H1 (cell line): ENCODE measurements at regions of chr19 and their contacts with region 1.

Region 1: GRCh38 chr19:7943444-7944176 is at the start of gene TIMM44:
- DNase-seq: peak; percentile 98
- H3K4me3 ChIP-seq: peak within 1 kb of the TSS; percentile 90 to 99 (median 97)
- H3K27ac ChIP-seq: peak within 1 kb of the TSS; percentile 94
- H3K4me1 ChIP-seq: peaks cover 0 to 3% (median 0%) of the 10 kb centered on the region in 4 experiments; a peak in 1 of 7 replicates
- H3K27me3 ChIP-seq: no peaks in the 10 kb centered on the region
- CTCF ChIP-seq: no peak
- EP300 ChIP-seq: no peak
- POLR2A ChIP-seq: peak; percentile 97 to 99
- RAD21 ChIP-seq: no peak
- total RNA-seq, gene TIMM44: 123 and 131 TPM in 2 replicates

Region 2: DNA sequence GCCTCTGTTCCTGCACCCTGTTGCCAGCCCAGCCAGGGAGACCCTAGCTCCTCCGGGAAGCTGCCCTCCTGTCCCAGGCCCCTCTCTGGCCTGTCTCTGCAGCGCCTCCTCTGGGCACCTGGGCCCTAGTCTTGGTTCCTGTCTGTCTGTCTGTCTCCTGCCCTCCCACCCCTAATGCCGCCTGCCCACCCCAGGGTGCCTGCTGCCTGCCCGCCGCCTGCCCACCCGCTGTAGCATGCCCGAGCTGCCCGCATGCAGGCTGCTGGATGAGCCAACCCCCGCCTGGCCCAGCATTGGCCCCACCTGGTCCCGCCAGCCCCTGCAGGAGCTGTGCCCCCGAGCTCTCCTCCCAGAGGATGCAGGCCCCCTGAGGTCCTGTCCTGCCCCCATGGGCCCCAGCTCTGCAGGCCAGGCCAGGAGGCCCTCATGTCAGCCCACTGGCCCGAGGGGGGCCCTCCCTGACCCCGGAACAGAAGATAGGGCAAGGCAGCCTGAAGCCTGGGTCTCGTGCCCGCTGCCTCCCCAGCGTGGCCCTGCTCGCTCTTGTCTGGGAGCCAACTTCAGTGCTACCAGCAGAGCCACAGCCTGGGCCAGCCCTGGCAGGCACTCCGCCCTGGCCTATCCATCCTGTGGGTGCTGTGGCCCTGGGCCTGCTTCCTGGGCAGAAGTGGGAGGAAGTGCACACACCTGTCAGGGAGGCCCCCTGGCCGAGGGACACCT is 34.7 kb before region 1 on chr19:
- CTCF ChIA-PET with region 1: interaction called, 4 read pairs
- POLR2A ChIA-PET with region 1: interaction called, 12 read pairs
- DNase-seq: no peak
- H3K4me3 ChIP-seq: no peak overlapping the region
- H3K27ac ChIP-seq: no peak overlapping the region
- H3K4me1 ChIP-seq: peaks cover 0 to 5% (median 4%) of the 10 kb centered on the region in 4 experiments; a peak in 5 of 7 replicates
- H3K27me3 ChIP-seq: peaks cover 0 to 1% (median 0%) of the 10 kb centered on the region in 4 experiments; a peak in 1 of 7 replicates
- CTCF ChIP-seq: peak; percentile 30 to 44 (median 32)
- EP300 ChIP-seq: no peak
- POLR2A ChIP-seq: no peak
- RAD21 ChIP-seq: 0 out of 4 replicates have a peak, but pooled peaks of 1 of the 2 experiments have one; percentile 12

Region 3: DNA sequence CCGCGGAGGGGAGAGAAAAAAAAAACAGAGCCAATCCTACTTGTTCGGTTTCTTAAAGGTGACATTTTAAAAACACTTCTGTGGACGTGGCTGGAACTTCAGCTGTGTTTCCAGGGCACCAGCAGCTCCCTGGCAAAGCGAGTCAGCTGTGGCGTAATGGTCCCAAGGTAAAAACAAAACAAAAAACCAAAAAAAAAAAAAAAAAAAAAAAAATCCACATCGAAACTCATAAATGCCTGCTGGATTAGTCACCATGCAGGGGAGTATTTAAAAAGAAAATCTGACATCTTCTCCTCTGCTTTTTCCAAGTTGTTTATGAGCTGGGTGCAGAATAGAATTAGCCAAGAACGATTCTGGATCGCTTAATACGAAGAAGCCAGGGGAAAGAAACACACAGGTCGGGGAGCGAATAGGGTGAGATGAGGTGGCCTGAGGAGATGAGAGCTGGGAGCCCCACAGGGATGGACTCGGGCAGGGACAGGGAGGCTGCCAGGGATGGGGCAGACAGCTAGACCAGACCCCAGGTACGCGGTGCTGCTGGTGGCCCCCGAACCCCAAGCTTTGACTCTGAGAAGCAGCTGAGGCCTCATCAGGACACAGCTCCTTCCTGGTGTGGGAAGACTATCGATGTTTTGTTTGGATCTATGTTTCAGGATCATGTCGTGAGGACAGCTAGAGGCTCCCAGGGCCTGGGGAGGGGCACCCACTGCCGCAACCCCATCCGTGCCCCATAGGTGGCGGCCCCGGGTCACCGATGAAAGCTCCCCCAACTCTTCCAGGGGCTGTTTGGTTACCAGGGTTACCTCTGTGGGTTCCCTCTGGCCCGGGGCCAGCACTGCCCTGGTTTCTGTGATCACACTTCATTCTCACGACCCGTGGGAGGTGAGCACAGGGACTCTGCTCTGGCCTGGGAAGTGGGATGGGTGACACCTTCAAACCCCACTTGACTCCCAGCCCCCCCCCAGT is 14.6 kb before region 1 on chr19:
- CTCF ChIA-PET with region 1: interaction called, 28 read pairs
- POLR2A ChIA-PET with region 1: interaction called, 205 read pairs
- DNase-seq: peak in 1 of 2 experiments; percentile 90
- H3K4me3 ChIP-seq: no peak overlapping the region
- H3K27ac ChIP-seq: no peak overlapping the region
- H3K4me1 ChIP-seq: peaks cover 0 to 8% (median 2%) of the 10 kb centered on the region in 4 experiments; a peak in 5 of 7 replicates
- H3K27me3 ChIP-seq: no peaks in the 10 kb centered on the region
- CTCF ChIP-seq: peak; percentile 49 to 71 (median 69); a peak in 3 of 4 replicates
- EP300 ChIP-seq: no peak
- POLR2A ChIP-seq: peak in 1 of 2 experiments; percentile 38; a peak in 1 of 3 replicates
- RAD21 ChIP-seq: peak; percentile 50 to 65

Region 4: DNA sequence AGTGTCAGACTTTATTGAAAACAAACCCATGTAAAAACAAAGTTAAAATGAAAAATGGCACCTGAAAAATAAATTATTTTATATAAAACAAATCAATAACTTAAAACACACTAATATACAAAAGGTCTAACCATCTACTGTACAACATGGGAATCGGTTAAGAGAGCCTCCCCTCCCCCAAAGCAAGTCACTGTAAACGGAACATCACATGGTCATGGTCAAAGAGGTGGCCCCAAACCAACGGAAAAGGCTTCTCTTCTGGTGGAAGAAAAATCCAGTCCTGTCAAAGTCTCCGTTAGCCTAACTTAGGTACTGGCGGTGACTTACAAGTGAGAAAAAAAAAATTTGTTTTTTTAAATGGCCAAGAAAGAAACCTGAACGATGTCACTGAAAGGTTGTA is 15.6 kb after region 1 on chr19:
- CTCF ChIA-PET with region 1: interaction called, 21 read pairs
- POLR2A ChIA-PET with region 1: interaction called, 98 read pairs
- DNase-seq: no peak
- H3K4me3 ChIP-seq: no peak overlapping the region
- H3K27ac ChIP-seq: no peak overlapping the region
- H3K4me1 ChIP-seq: no peaks in the 10 kb centered on the region
- H3K27me3 ChIP-seq: no peaks in the 10 kb centered on the region; a peak in 1 of 7 replicates
- CTCF ChIP-seq: no peak
- EP300 ChIP-seq: no peak
- POLR2A ChIP-seq: no peak
- RAD21 ChIP-seq: no peak

Region 5: GRCh38 chr19:8005534-8006256 is 62.1 kb after region 1 on chr19 and contains the start of gene ELAVL1:
- CTCF ChIA-PET with region 1: interaction called, 19 read pairs
- POLR2A ChIA-PET with region 1: interaction called, 20 read pairs
- DNase-seq: peak; percentile 53 to 94
- H3K4me3 ChIP-seq: peak within 1 kb of the TSS; percentile 63 to 89 (median 85)
- H3K27ac ChIP-seq: peak within 1 kb of the TSS; percentile 93; the same call in 1 of the 2 replicates
- H3K4me1 ChIP-seq: peaks cover 6 to 13% (median 9%) of the 10 kb centered on the region in 4 experiments
- H3K27me3 ChIP-seq: no peaks in the 10 kb centered on the region
- CTCF ChIP-seq: no peak
- EP300 ChIP-seq: no peak
- POLR2A ChIP-seq: peak; percentile 80 to 87
- RAD21 ChIP-seq: no peak
- total RNA-seq, gene ELAVL1: 163 and 167 TPM in 2 replicates